Psoas muscle (tissue), 8 donors: ENCODE measurements at regions of chr18 and their contacts with region 1.

Region 1: DNA sequence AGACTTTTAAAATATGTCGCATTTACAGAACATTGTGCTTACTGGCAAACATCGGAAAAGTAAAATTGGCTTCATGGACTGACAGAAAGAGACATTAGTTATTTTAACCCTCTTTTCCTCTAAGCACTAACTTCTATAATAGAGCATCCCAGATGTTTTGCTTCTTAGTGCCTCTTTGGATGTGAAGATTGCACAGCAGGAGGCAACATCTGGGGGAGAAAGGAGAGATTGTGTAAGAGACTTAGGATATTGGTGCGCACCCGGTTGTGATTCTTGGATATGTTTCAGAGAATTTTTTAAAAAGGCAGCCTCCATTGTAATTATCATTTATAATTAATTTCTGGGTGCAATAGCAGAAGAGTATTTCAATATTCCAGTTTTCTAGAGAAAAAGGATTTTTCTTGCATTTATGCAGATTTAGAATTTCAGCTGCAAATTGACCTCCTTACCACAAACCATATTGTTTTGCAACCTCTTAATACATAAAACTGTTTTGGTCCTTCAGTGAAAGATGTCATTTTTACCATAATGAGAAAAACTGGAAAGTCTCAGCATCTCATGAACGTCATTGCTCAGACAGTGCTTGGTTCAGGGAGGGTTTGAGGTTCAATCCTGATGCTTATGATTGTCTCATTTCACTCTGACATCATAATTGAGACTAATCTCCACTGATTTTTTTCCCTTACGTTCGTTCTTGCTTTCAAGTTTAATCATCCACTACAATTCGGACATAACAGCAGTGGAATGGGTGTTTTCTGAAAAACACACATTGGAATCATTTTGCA is 404.3 kb downstream of the ZNF521 start:
- DNase-seq: no peak
- ATAC-seq: peak in 1 of 4 donors; percentile 52
- H3K4me3 ChIP-seq: no peak overlapping the region
- H3K27ac ChIP-seq: no peak overlapping the region
- H3K4me1 ChIP-seq: no peaks in the 10 kb centered on the region
- H3K27me3 ChIP-seq: no peaks in the 10 kb centered on the region
- CTCF ChIP-seq: no peak

Region 2: GRCh38 chr18:24885276-24885675 is 62.4 kb before region 1 on chr18:
- intact Hi-C with region 1: loop called in 1 of 2 experiments (anchors 10 kb)
- DNase-seq: no peak
- ATAC-seq: no peak
- H3K4me3 ChIP-seq: no peak overlapping the region
- H3K27ac ChIP-seq: no peak overlapping the region
- H3K4me1 ChIP-seq: no peaks in the 10 kb centered on the region
- H3K27me3 ChIP-seq: no peaks in the 10 kb centered on the region
- CTCF ChIP-seq: no peak

Region 3: DNA sequence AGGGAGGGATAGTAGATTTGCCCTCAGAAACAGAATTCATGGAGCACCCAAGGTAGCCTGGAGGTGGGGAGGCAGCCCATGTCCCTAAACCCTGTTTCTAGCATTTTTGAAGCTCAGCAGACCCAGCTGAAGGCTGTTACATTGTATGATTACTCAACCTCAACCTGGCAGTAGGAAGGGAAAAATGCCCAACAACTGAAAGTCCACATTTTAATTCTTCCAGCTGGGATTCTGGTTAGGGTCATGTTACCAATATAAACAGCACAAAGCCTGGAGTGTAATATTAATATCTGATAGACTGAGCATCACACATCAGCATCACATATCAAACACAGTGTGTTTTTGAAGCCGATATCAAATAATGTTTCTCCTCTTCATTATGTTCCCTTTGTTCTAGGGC is 50.3 kb before region 1 on chr18:
- intact Hi-C with region 1: no loop called
- DNase-seq: no peak
- ATAC-seq: no peak
- H3K4me3 ChIP-seq: no peak overlapping the region
- H3K27ac ChIP-seq: no peak overlapping the region
- H3K4me1 ChIP-seq: no peaks in the 10 kb centered on the region
- H3K27me3 ChIP-seq: peaks cover 0 to 3% (median 0%) of the 10 kb centered on the region in 3 donors
- CTCF ChIP-seq: no peak

Region 4: DNA sequence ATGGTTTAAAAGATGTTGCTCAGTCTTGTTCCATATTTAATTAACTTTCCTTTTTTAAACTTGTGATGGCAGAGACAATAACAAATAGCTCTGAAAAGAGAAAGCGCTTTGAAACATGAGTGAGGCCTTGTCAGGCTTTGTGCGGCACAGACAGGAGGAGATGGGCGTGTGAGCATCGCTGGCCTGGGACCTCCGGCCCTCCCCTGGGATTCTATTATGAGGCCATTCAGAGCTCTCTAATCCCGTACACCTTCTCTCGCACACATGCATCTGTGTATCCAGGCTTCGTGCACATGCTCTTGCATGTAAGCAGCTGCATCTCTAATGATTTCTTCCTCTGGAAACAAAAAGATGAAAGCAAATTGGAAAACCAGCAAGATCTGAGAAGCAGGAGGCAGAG is 90.5 kb after region 1 on chr18:
- intact Hi-C with region 1: loop called in 1 of 2 experiments (anchors 10 kb)
- DNase-seq: no peak
- ATAC-seq: no peak
- H3K4me3 ChIP-seq: no peak overlapping the region
- H3K27ac ChIP-seq: no peak overlapping the region
- H3K4me1 ChIP-seq: peaks cover 5% of the 10 kb centered on the region
- H3K27me3 ChIP-seq: no peaks in the 10 kb centered on the region
- CTCF ChIP-seq: no peak

Region 5: DNA sequence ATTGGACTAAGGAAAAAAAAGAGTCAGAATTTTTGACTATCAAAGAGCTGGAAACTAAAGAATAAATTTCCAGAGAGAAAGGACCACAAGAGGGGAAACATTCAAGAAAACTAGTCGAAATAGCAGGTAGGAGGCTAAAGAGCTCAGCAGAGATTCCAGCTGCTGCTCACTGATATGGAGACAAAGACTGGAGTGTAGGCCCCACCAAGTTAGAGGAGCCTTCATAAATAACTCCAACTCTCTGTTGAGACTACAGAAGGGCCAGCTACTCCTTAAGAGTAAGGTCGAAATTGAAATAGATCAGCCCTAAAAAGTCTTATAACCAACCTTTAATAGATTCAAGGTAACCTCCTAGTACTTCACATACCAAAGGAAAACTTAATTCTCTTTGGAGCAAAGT is 1111.6 kb after region 1 on chr18:
- intact Hi-C with region 1: no loop called
- DNase-seq: no peak
- ATAC-seq: no peak
- H3K4me3 ChIP-seq: no peak overlapping the region
- H3K27ac ChIP-seq: no peak overlapping the region
- H3K4me1 ChIP-seq: no peaks in the 10 kb centered on the region
- H3K27me3 ChIP-seq: no peaks in the 10 kb centered on the region
- CTCF ChIP-seq: no peak